ENCODE measurements at regions of chr5 and their contacts with region 1.

Region 1: DNA sequence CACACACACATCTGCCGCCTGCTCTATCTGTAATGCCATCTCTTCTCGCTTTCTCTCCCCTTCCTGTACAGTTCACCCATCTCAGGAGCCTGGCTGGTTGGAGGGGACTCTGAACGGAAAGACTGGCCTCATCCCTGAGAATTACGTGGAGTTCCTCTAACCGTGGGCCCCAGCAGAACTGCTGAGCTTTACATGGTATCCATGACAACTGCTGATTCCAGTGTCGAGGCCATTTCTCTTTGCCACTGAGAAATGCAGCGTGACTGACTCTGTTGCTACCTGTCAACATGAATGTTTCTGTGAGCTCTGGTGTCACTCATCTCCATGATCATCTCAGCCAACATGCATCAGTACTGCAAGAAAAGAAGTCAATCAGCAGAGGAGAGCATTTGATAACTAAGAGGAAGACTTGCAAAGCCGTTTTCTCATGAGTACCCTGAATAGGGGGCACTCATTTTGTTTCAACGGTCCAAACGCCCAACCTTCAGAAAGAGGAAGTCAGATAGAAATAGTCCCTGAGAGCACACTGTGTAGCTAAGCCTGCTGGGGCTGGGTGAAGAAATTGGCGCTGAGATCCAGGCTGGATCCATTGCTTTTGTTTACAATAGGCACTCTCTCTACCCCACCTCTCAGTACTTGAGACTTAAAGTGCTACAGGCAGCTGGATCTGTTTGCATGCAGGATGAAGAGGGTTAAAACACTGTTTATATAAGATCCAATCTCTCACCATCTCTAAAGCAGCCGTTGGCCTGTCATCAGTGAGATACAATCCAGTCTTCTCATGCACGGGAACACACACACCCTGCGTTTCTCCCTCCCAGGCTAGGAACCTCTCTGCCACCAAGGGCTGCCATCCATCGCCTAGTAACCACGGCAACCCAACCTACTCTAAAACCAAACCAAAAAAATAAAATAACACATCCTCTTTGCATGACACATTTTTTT is 180.9 kb downstream of the NR3C1 start:
- DNase-seq: peak; percentile 60 to 89
- ATAC-seq: peak; percentile 77 to 80 (median 80)
- H3K4me3 ChIP-seq: no peak overlapping the region
- H3K4me3 Mint-ChIP-seq: peak overlapping the region; percentile 70
- H3K27ac ChIP-seq: peak overlapping the region; percentile 86
- H3K27ac Mint-ChIP-seq: peak overlapping the region; percentile 92 to 95
- H3K4me1 ChIP-seq: peaks cover 30% of the 10 kb centered on the region
- H3K4me1 Mint-ChIP-seq: peaks cover 69 to 70% of the 10 kb centered on the region in 2 donors
- H3K27me3 ChIP-seq: no peaks in the 10 kb centered on the region
- H3K27me3 Mint-ChIP-seq: no peaks in the 10 kb centered on the region
- CTCF ChIP-seq: no peak

Region 2: GRCh38 chr5:142922223-142922952 is 300.2 kb before region 1 on chr5:
- intact Hi-C with region 1: loop called (anchors 10 kb)
- DNase-seq: peak in 1 of 2 donors; percentile 60
- ATAC-seq: peak; percentile 52 to 66 (median 59)
- H3K4me3 ChIP-seq: no peak overlapping the region
- H3K4me3 Mint-ChIP-seq: no peak overlapping the region
- H3K27ac ChIP-seq: peak overlapping the region; percentile 0
- H3K27ac Mint-ChIP-seq: peak overlapping the region; percentile 86 to 98
- H3K4me1 ChIP-seq: peaks cover 28% of the 10 kb centered on the region
- H3K4me1 Mint-ChIP-seq: peaks cover 52 to 53% of the 10 kb centered on the region in 2 donors
- H3K27me3 ChIP-seq: no peaks in the 10 kb centered on the region
- H3K27me3 Mint-ChIP-seq: no peaks in the 10 kb centered on the region
- CTCF ChIP-seq: peak; percentile 49

Measured in natural killer cell (primary cell).